ENCODE measurements at regions of chr19 and their contacts with region 1.

Region 1: DNA sequence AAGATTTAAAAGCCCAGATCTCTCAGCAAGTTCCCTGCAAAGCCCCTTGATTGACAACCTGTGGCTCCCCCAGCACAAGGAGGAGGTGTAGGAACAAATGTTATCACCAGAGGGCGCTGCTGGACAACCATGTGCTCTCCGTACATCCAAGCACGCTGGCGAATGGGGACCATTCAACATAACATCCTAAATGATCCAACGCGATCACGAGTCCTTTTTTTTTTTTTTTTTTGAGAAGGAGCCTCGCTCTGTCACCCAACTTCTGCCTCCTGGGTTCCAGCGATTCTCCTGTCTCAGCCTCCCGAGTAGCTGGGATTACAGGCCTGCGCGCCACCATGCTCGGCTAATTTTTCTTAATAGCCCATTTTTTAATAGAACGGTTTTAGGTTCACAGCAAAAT is 52.0 kb downstream of the NWD1 start:
- DNase-seq: peak; percentile 38
- ATAC-seq: peak; percentile 94
- H3K4me3 ChIP-seq: no peak overlapping the region
- H3K27ac ChIP-seq: no peak overlapping the region
- H3K4me1 ChIP-seq: no peaks in the 10 kb centered on the region
- H3K27me3 ChIP-seq: no peaks in the 10 kb centered on the region
- CTCF ChIP-seq: peak; percentile 85

Region 2: DNA sequence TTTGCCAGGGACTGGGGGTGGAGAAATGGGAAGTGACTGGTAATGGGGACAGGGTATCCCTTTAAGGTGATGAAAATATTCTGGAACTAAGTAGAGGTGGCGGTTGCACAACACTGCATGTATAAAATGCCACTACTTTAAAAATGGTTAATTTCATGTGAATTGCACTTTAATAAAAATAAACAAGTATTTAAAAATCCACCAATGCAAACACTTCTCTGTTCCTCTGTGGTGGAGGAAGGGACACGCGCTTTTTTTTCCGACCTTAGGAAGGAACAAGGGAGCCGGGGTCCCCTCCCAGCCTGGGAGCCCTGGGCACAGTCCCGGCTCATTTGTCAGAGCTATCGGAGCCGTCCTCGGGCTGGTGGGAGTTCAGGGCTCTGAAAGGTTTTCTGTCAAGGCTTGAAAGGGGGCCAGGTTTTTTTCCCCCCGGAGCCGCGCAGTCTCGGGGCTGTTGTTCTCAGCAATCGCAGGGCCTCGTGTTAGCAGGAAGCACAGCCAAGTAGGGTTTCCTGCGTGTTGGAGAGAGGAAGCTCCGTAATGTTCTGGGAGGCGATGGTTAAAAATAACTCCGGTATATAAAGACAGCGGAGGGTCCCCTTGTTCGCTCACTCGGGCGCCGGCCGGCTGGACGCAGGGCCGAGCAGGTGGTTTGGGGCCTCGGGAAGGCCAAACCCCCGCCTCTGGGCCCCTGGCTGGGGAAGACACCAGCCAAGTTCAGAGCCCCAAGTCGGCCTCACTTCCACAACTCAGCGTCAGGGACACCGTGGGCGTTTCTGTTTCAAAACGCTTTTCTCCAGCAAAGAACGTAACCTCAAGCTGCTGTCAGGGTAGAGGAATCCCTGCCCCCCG is 488.2 kb before region 1 on chr19:
- CTCF ChIA-PET with region 1: no interaction called
- POLR2A ChIA-PET with region 1: no interaction called
- in situ Hi-C with region 1: no loop called
- intact Hi-C with region 1: no loop called
- DNase-seq: no peak
- ATAC-seq: no peak
- H3K4me3 ChIP-seq: no peak overlapping the region
- H3K27ac ChIP-seq: 0 out of 2 replicates have a peak overlapping the region, but pooled peaks have one; percentile 7
- H3K4me1 ChIP-seq: peaks cover 18% of the 10 kb centered on the region
- H3K27me3 ChIP-seq: no peaks in the 10 kb centered on the region
- CTCF ChIP-seq: no peak

Region 3: DNA sequence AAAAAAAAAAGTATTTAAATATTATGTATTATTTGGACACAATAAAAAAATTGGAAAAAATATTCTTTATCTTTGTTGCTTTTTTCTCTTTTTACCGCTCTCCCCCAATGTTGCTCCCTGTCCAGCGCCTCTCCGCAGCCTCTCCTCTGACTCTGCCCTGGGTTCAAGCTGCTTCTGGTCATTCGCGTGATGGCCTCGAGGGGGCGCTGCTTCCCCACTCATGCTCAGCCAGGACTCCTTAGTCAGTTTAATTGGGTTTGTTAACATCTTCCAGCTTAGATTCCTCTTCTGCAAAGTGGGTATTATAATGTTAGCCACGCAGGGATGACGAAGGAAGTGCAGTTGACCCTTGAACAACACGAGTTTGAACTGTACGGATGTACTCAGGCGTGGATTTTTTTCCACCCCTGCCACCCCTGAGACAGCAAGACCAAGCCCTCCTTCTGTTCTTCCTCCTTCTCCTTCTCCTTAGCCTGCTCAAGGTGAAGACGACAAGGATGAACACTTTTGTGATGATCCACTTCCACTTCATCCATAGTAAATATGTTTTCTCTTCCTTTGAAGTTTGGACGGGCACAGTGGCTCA is 56.8 kb before region 1 on chr19:
- CTCF ChIA-PET with region 1: no interaction called
- POLR2A ChIA-PET with region 1: no interaction called
- in situ Hi-C with region 1: no loop called
- intact Hi-C with region 1: loop called (anchors 10 kb)
- DNase-seq: peak; percentile 35
- ATAC-seq: peak; percentile 54; the same call in 1 of the 2 replicates
- H3K4me3 ChIP-seq: no peak overlapping the region; a peak in 1 of 4 replicates
- H3K27ac ChIP-seq: no peak overlapping the region
- H3K4me1 ChIP-seq: peaks cover 3% of the 10 kb centered on the region
- H3K27me3 ChIP-seq: no peaks in the 10 kb centered on the region
- CTCF ChIP-seq: peak; percentile 89

Region 4: GRCh38 chr19:16726916-16727315 is 44.7 kb before region 1 on chr19:
- CTCF ChIA-PET with region 1: no interaction called
- POLR2A ChIA-PET with region 1: no interaction called
- in situ Hi-C with region 1: no loop called
- intact Hi-C with region 1: no loop called
- DNase-seq: no peak
- ATAC-seq: no peak
- H3K4me3 ChIP-seq: no peak overlapping the region
- H3K27ac ChIP-seq: no peak overlapping the region
- H3K4me1 ChIP-seq: no peaks in the 10 kb centered on the region
- H3K27me3 ChIP-seq: no peaks in the 10 kb centered on the region
- CTCF ChIP-seq: no peak

Region 5: GRCh38 chr19:16897154-16897855 is 125.7 kb after region 1 on chr19:
- CTCF ChIA-PET with region 1: interaction called, 4 read pairs
- POLR2A ChIA-PET with region 1: no interaction called
- in situ Hi-C with region 1: no loop called
- intact Hi-C with region 1: loop called (anchors 10 kb)
- DNase-seq: peak; percentile 64
- ATAC-seq: peak; percentile 89
- H3K4me3 ChIP-seq: peak overlapping the region; percentile 57
- H3K27ac ChIP-seq: no peak overlapping the region; the same call in 1 of the 2 replicates
- H3K4me1 ChIP-seq: no peaks in the 10 kb centered on the region
- H3K27me3 ChIP-seq: no peaks in the 10 kb centered on the region
- CTCF ChIP-seq: no peak

Region 6: DNA sequence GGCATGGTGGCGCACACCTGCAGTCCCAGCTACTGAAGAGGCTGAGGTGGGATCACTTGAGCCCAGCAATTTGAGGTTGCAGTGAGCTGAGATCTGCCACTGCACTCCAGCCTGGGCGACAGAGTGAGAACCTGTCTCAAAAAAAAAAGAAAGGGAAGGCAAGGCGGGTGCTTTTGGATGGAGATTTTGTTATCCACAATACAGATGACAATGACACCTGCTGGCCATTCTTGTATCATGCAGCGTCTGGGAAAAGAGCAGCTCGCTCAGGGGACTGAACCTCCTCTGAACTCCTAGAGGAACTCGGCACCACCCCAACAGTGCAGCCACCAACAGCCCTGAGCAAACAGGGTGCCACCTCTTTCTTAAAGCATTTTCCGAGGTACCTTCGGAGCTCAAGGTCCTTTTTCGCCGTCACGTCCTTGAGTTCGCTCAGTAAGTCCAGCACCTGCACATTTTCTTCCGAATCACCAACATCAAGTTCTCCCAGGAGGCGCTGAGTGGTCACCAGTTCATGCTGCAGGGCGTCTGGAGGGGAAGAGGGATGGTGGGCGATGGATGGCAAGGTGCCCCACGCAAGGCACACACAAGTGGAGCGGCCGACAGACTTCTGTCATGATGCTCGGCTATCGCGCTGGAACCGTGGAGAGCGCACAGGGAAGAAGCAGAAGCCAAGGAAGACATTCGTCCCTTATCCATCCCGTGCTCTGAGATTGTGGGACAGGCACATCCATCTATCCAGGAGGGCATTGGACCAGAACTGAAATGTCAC is 281.0 kb after region 1 on chr19:
- CTCF ChIA-PET with region 1: interaction called, 5 read pairs
- POLR2A ChIA-PET with region 1: no interaction called
- in situ Hi-C with region 1: no loop called
- intact Hi-C with region 1: loop called (anchors 10 kb)
- DNase-seq: no peak
- ATAC-seq: peak; percentile 69
- H3K4me3 ChIP-seq: no peak overlapping the region
- H3K27ac ChIP-seq: no peak overlapping the region
- H3K4me1 ChIP-seq: no peaks in the 10 kb centered on the region
- H3K27me3 ChIP-seq: no peaks in the 10 kb centered on the region
- CTCF ChIP-seq: no peak; the same call in 1 of the 2 replicates

Measured in Panc1 (cell line).